Dorsolateral prefrontal cortex (tissue), 120 donors: ENCODE measurements at regions of chr7 and their contacts with region 1.

Region 1: GRCh38 chr7:149624419-149625339 is 127.1 kb upstream of the ZNF746 start:
- DNase-seq: peak; percentile 83 to 93 (median 91)
- H3K4me3 ChIP-seq: peak overlapping the region; percentile 61 to 100 (median 90)
- H3K27ac ChIP-seq: peak overlapping the region in 57 of 59 donors; percentile 2 to 93 (median 84)
- H3K27me3 ChIP-seq: no peaks in the 10 kb centered on the region
- CTCF ChIP-seq: peak; percentile 88 to 100 (median 98)

Region 2: GRCh38 chr7:149284850-149285626 is 339.6 kb before region 1 on chr7:
- intact Hi-C with region 1: loop called in 1 of 2 experiments (anchors 10 kb)
- DNase-seq: peak; percentile 93 to 97 (median 96)
- H3K4me3 ChIP-seq: peak overlapping the region; percentile 54 to 98 (median 79)
- H3K27ac ChIP-seq: peak overlapping the region in 24 of 59 donors; percentile 0 to 67 (median 36)
- H3K27me3 ChIP-seq: no peaks in the 10 kb centered on the region
- CTCF ChIP-seq: peak in 24 of 56 donors; percentile 8 to 45 (median 23)

Region 3: DNA sequence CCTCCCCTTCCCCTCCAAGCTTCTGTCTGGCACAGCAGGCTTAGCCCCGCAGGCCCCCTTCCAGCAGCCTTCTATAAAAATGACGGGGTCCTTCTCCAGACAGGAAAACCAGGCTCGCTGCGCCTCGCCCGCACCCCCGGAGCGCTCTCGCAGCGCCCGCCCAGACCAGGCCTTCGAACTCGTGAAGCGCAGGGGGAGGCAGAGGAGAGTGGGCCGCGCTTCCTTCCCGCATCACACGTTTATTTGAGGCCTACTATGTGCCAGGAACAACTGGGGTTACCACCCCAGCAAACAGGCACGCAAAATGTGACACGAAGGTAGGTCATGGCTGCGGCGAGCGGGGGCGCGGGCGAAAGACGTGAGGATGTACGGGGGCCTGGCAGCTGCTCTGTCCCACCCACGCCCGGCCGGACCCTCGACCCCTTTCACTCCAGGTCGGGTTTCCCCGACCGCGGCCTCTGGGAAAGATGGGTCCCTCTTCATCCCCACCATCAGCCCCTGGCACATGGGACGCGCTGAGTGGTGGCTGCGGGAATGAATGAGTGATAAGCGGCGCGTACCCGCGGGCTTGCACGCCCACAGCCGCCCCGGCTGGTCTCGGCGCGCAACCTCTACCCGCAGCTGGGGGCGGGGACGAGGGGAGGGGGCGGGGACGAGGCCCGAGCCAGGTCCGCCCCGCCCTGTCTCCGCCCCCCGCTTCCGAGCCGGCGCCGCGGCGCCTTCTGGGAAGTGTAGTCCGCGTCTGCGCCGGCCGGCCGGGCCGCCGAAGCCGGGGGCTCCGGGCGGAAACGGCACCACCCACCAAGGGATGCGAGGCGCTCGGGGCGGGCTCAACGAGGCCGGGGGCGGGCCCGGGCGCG is 89.6 kb after region 1 on chr7:
- intact Hi-C with region 1: loop called in 1 of 2 experiments (anchors 5 kb)
- DNase-seq: peak; percentile 68 to 92 (median 84)
- H3K4me3 ChIP-seq: peak overlapping the region; percentile 53 to 96 (median 80)
- H3K27ac ChIP-seq: peak overlapping the region in 54 of 59 donors; percentile 1 to 94 (median 77)
- H3K27me3 ChIP-seq: no peaks in the 10 kb centered on the region
- CTCF ChIP-seq: peak in 22 of 56 donors; percentile 6 to 51 (median 20)

Region 4: DNA sequence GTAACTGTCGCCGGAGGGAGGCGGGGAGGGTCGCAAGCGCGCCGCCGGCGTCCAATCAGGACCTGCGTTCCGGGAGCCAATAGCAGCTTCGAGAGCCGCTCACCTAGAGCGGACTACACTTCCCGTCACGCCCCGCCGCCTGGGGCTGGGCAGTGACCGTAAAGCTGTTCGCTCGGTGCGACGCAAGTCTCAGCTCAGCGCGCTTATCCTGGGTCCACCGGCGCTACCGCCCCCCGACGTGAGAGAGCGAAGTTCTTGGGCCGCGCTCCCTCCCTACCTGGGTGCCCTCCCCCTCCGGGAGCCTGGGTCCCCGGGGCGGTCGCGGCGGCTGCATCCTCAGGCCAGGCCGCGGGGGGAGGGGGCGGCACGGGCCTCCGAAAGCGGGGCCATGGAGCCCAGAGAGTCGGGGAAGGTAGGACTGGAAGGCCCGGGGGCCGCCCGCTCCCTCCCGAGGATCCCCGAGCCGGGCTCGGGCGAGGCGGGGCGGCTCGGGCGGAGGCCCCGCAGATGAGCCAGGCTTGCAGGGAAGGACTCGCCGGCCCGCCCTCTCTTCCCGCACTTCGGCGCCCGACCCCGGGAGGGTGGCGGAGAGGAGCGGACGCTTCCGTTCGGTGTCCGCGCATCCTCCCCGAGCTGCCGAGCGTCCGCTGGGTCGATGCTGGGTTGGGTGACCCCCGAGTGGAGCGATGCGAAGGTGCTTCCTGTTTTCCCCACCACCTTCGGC is 213.7 kb after region 1 on chr7 and contains the start of gene ZNF862:
- intact Hi-C with region 1: loop called in 1 of 2 experiments (anchors 5 kb)
- DNase-seq: peak; percentile 98 to 100 (median 99)
- H3K4me3 ChIP-seq: peak within 1 kb of the TSS; percentile 68 to 100 (median 91)
- H3K27ac ChIP-seq: peak within 1 kb of the TSS in 58 of 59 donors; percentile 6 to 95 (median 83)
- H3K27me3 ChIP-seq: no peaks in the 10 kb centered on the region
- CTCF ChIP-seq: peak in 42 of 56 donors; percentile 7 to 61 (median 38)
- total RNA-seq, gene ZNF862: 22.0 to 54.7 (median 37.4) TPM